Heart right ventricle (tissue), 16 donors: ENCODE measurements at regions of chr6 and their contacts with region 1.

Region 1: GRCh38 chr6:70686548-70687133 is 19.0 kb downstream of the SMAP1 start:
- DNase-seq: peak in 1 of 2 donors; percentile 22
- ATAC-seq: peak in 3 of 8 donors; percentile 54 to 58 (median 56)
- H3K4me3 ChIP-seq: no peak overlapping the region
- H3K27ac ChIP-seq: no peak overlapping the region
- H3K4me1 ChIP-seq: peaks cover 0 to 41% (median 29%) of the 10 kb centered on the region in 9 donors
- H3K27me3 ChIP-seq: no peaks in the 10 kb centered on the region
- CTCF ChIP-seq: peak; percentile 61 to 86 (median 82)

Region 2: GRCh38 chr6:70304616-70305015 is 382.0 kb before region 1 on chr6:
- intact Hi-C with region 1: loop called in 1 of 10 experiments (anchors 10 kb)
- DNase-seq: peak in 1 of 2 donors; percentile 27
- ATAC-seq: peak in 1 of 8 donors; percentile 49
- H3K4me3 ChIP-seq: no peak overlapping the region
- H3K27ac ChIP-seq: no peak overlapping the region
- H3K4me1 ChIP-seq: no peaks in the 10 kb centered on the region
- H3K27me3 ChIP-seq: peaks cover 0 to 25% (median 0%) of the 10 kb centered on the region in 7 donors
- CTCF ChIP-seq: no peak

Region 3: DNA sequence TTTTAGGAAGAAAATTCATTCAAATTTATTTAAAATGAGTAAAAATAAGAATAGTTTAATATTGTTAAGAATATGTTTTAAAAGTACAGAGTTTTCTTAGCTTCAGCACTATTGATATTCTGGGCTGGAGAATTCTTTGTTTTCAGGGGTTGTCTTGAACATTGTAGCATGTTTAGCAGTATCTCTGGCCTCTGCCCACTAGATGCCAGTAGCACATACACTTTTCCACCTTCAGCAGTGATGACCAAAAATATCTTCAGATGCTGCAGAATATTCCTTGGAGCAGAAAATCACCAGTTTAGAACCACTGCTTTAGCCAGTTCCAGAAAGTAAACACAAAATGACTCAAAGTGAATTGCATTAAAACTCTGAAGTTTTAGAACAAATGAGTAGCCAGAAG is 139.3 kb before region 1 on chr6:
- intact Hi-C with region 1: loop called in 9 of 10 experiments (anchors 1 to 10 kb)
- DNase-seq: no peak
- ATAC-seq: peak; percentile 58 to 85 (median 72)
- H3K4me3 ChIP-seq: no peak overlapping the region
- H3K27ac ChIP-seq: no peak overlapping the region
- H3K4me1 ChIP-seq: peaks cover 0 to 5% (median 0%) of the 10 kb centered on the region in 9 donors
- H3K27me3 ChIP-seq: no peaks in the 10 kb centered on the region
- CTCF ChIP-seq: peak in 7 of 9 donors; percentile 37 to 67 (median 52)

Region 4: DNA sequence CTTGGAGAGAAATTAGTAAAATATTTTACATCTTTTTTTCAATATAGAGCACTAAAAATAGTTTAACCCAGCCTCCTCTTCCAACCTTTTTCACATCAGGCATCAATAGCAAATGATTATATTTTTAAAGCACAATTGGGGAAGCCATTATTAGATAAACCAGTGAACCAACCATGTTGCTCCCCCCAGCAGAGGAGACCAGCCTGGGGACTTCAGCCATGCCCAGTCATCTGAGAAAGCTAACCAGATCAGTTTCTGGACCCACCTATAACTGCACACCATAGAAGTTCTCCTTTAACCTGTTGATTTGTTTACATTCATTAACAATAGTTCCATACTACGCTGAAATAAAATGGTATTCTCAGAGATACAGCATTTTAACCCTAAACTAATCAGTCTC is 133.7 kb before region 1 on chr6:
- intact Hi-C with region 1: loop called in 9 of 10 experiments (anchors 1 to 10 kb)
- DNase-seq: no peak
- ATAC-seq: peak in 2 of 8 donors; percentile 33 to 44
- H3K4me3 ChIP-seq: peak overlapping the region in 1 of 10 donors; percentile 21
- H3K27ac ChIP-seq: peak overlapping the region in 7 of 10 donors; percentile 62 to 76 (median 74)
- H3K4me1 ChIP-seq: peaks cover 0 to under 1% (median 0%) of the 10 kb centered on the region in 9 donors
- H3K27me3 ChIP-seq: no peaks in the 10 kb centered on the region
- CTCF ChIP-seq: no peak

Region 5: GRCh38 chr6:70566751-70567382 is 119.8 kb before region 1 on chr6 and contains the start of gene SDHAF4:
- intact Hi-C with region 1: loop called in 4 of 10 experiments (anchors 5 to 10 kb)
- DNase-seq: peak; percentile 94 to 96
- ATAC-seq: peak; percentile 99 to 100 (median 100)
- H3K4me3 ChIP-seq: peak within 1 kb of the TSS; percentile 71 to 93 (median 81)
- H3K27ac ChIP-seq: peak within 1 kb of the TSS; percentile 49 to 95 (median 90)
- H3K4me1 ChIP-seq: peaks cover 0 to 15% (median 5%) of the 10 kb centered on the region in 9 donors
- H3K27me3 ChIP-seq: no peaks in the 10 kb centered on the region
- CTCF ChIP-seq: peak in 1 of 9 donors; percentile 38
- total RNA-seq, gene SDHAF4: 10.9 to 21.3 (median 17.7) TPM